Activated CD8-positive, alpha-beta T cell treated with anti-CD3 and anti-CD28 coated beads for 36 hours (primary cell): ENCODE measurements at regions of chr2 and their contacts with region 1.

Region 1: DNA sequence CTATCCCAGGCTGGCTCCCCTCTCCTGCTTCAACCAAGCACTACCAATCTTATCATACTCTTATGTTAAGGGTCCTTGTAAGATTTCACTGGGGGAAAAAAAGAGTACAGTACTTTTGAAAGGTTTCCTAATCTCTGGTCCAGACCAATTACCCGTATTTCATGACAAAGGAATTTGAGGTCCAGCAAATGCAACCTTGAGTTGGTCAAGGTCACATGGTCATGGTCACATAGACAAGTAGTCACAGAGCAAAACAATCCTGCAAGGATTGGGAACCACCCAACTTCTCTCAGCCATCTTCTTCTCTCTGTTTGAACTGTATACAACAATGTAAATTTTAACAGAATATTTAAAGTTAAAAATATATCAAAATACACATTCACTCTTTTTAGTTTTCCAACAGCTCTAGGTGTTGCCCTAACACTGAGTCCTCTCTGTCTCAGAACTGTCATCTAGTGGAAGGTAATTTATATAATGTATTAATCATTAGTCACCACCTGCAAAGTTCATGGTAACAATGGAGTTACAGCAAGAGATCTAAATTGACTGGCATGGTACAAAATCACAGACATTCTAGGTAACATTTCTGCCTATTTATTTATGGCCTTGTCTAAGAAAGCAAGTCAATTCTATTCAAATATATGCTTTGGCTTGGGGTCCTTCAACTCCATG is 21.5 kb downstream of the DTNB start:
- DNase-seq: no peak
- ATAC-seq: no peak
- H3K4me3 Mint-ChIP-seq: no peak overlapping the region
- H3K27ac Mint-ChIP-seq: no peak overlapping the region
- H3K4me1 Mint-ChIP-seq: peaks cover 4% of the 10 kb centered on the region
- H3K27me3 Mint-ChIP-seq: no peaks in the 10 kb centered on the region
- CTCF ChIP-seq: no peak

Region 2: GRCh38 chr2:25664183-25664964 is 12.5 kb after region 1 on chr2:
- CTCF ChIA-PET with region 1: interaction called, 10 read pairs
- POLR2A ChIA-PET with region 1: no interaction called
- intact Hi-C with region 1: no loop called
- DNase-seq: peak; percentile 56
- ATAC-seq: peak; percentile 60
- H3K4me3 Mint-ChIP-seq: peak overlapping the region; percentile 31
- H3K27ac Mint-ChIP-seq: no peak overlapping the region
- H3K4me1 Mint-ChIP-seq: peaks cover 15% of the 10 kb centered on the region
- H3K27me3 Mint-ChIP-seq: no peaks in the 10 kb centered on the region
- CTCF ChIP-seq: peak; percentile 33